Activated T-helper 1 cell treated with anti-CD3 and anti-CD28 coated beads, Interleukin-12 subunit alpha, Interleukin-12 subunit beta, Interleukin-2, Interleukin-4 antibody, amounts not matched to agents 30 ng/mL and 10 ng/mL and 1 ng/mL, durations not matched to agents 14 hours and 24 hours and 36 hours (primary cell): ENCODE measurements at regions of chr12 and their contacts with region 1.

Region 1: GRCh38 chr12:46268590-46269558 is at the start of gene SLC38A1:
- DNase-seq: peak; percentile 85
- H3K4me3 Mint-ChIP-seq: no peak within 1 kb of the TSS
- H3K27ac Mint-ChIP-seq: no peak within 1 kb of the TSS
- H3K4me1 Mint-ChIP-seq: peaks cover 28% of the 10 kb centered on the region
- H3K27me3 Mint-ChIP-seq: no peaks in the 10 kb centered on the region
- total RNA-seq, gene SLC38A1: 172 and 182 TPM in 2 replicates

Region 2: DNA sequence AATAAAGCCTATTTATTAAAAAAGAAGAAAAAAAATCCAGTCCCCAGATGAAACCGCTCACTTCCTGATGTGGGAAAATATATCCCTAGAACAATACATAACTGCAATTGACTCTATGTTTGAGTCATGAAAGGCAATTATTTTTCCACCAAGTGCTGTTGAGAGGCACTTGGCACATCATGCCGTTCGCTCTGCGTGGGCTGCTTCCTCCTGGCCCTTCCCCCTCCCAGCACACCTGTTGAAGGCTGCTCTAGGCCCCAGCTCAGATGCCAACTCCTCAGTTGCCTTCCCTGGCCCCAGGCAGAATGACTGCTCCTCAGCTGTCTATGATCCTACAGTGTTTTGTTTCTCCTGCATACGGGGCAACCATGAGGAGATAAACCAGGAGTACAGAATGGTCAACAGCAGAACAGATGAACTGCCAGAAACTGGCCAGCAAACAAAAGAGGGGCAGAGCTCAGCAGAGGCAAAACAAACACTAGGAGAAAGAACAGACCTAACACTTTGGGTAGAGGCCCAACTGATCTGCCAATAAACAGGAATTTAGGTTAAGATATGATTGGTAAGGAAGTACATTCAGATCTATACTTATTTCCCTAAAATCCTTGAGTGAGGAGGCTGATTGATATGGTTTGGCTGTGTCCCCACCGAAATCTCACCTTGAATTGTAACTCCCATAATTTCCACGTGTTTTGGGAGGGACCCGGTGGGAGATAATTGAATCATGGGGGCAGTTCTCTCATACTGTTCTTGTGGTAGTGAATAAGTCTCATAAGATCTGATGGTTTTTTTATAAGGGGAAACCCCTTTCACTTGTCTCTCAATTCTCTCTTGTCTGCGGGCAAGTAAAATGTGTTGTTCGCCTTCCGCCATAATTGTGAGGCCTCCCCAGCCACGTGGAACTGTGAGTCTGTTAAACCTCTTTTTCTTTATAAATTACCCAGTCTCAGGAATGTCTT is 58.7 kb before region 1 on chr12:
- intact Hi-C with region 1: loop called (anchors 1 kb)
- DNase-seq: peak; percentile 31
- H3K4me3 Mint-ChIP-seq: peak overlapping the region; percentile 52
- H3K27ac Mint-ChIP-seq: peak overlapping the region; percentile 96
- H3K4me1 Mint-ChIP-seq: peaks cover 64% of the 10 kb centered on the region
- H3K27me3 Mint-ChIP-seq: no peaks in the 10 kb centered on the region

Region 3: DNA sequence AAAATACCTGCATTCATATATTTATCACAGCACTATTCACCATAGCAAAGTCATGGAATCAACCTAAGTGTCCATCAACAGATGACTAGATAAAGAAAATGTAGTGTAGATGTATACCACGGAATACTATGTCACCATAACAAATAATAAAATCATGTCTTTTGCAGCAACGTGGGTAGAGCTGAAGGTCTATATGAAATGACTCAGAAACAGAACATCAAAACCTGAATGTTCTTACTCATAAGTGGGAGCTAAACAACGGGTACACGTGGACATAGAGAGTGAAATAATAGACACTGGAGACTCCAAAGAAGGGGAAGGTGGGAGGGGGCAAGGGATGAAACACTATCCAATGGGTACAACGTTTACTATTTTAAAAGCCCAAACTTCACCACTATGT is 37.9 kb before region 1 on chr12:
- intact Hi-C with region 1: loop called (anchors 1 kb)
- DNase-seq: no peak
- H3K4me3 Mint-ChIP-seq: no peak overlapping the region
- H3K27ac Mint-ChIP-seq: peak overlapping the region; percentile 31
- H3K4me1 Mint-ChIP-seq: peaks cover 55% of the 10 kb centered on the region
- H3K27me3 Mint-ChIP-seq: no peaks in the 10 kb centered on the region

Region 4: DNA sequence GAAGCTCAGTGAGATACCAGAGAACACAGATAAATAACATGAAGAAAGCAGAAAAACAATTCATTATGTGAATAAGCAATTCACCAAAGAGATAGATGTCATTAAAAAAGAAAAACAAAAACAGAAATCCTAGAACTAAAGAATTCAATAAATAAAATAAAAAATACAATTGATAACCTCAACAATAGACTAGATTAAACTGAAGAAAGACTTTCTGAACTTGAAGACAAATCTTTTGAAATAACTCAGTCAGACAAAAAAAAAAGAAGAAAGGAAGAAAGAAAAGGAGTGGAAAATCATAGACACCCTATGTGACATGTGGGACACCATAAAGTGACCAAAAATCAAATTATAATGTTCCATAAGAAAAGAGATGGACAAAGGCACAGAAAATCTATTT is 14.0 kb after region 1 on chr12:
- intact Hi-C with region 1: no loop called
- DNase-seq: no peak
- H3K4me3 Mint-ChIP-seq: no peak overlapping the region
- H3K27ac Mint-ChIP-seq: no peak overlapping the region
- H3K4me1 Mint-ChIP-seq: no peaks in the 10 kb centered on the region
- H3K27me3 Mint-ChIP-seq: peaks cover 5% of the 10 kb centered on the region

Region 5: DNA sequence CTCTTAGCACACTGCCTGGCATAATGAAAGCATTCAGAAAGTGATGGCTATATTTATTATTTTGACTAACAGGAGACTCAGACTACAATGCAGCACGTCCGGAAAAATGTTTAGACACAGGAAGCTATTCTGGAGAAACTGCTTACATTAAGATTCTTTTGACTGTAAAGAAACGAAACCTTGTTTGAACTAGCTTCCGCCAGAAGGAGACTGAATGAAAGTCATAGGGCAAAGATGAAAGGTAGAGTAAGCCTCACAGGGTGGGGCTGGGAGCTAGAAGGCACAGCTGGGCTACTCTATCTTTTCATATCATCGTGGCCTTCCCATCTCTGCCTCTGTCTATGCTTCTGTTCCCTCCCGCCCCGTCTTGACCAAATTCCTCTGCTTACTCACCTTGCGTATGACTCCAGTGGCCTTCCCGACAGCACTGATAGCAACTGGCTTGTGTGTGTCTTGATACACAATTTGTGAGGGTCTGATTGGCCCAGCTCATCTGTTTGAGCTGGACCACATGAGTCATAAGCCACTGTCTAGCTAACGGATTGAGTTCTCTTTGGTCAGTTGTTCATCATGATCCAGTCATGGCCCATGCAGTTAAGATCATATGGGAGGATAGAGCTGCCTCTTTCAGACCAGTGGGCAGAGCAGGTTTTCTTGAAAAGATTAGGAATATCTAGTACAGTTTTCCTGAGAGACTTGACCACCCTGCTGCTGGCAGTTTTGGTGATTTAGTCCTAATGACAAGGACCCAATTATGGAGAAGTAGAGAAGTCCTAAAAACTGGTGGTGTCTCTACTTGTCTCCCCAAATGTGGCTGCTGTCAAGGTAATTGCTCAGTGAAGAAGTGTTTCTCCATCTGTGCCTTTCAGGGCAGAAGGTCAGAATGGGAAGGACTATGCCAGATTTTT is 255.2 kb after region 1 on chr12:
- intact Hi-C with region 1: loop called (anchors 10 kb)
- DNase-seq: peak; percentile 48
- H3K4me3 Mint-ChIP-seq: peak overlapping the region; percentile 81
- H3K27ac Mint-ChIP-seq: peak overlapping the region; percentile 99
- H3K4me1 Mint-ChIP-seq: peaks cover 52% of the 10 kb centered on the region
- H3K27me3 Mint-ChIP-seq: no peaks in the 10 kb centered on the region

Region 6: GRCh38 chr12:46661110-46661845 is 392.4 kb after region 1 on chr12:
- intact Hi-C with region 1: loop called (anchors 5 kb)
- DNase-seq: no peak
- H3K4me3 Mint-ChIP-seq: no peak overlapping the region
- H3K27ac Mint-ChIP-seq: no peak overlapping the region
- H3K4me1 Mint-ChIP-seq: peaks cover 54% of the 10 kb centered on the region
- H3K27me3 Mint-ChIP-seq: no peaks in the 10 kb centered on the region